AG04449 (cell line): ENCODE measurements at regions of chr5 and their contacts with region 1.

Region 1: GRCh38 chr5:65742565-65743231 is 20.7 kb downstream of the NLN start:
- DNase-seq: peak; percentile 58
- H3K4me3 ChIP-seq: no peak overlapping the region
- CTCF ChIP-seq: peak; percentile 64

Region 2: GRCh38 chr5:65382582-65382981 is 360.1 kb before region 1 on chr5:
- CTCF ChIA-PET with region 1: no interaction called
- POLR2A ChIA-PET with region 1: no interaction called
- DNase-seq: no peak
- H3K4me3 ChIP-seq: no peak overlapping the region
- CTCF ChIP-seq: no peak

Region 3: GRCh38 chr5:65539827-65540226 is 202.9 kb before region 1 on chr5:
- CTCF ChIA-PET with region 1: no interaction called
- POLR2A ChIA-PET with region 1: no interaction called
- DNase-seq: no peak
- H3K4me3 ChIP-seq: no peak overlapping the region
- CTCF ChIP-seq: no peak

Region 4: DNA sequence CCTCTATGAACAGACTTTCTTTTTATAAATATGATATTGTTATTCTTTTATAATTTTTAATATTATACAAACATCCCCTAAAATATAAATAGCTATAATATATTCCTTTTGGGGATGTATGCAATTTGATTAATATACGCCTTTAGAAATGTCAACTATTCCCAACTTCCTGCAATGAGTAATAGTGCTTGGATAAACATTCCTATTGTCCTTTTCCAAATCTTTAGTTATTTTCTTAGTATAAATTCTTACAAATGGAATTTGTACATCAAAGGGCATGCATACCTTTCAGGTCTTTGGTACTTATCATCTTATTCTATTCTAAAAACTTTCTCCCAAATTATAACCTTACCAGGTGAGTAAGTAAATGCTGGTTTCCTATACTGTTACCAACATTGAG is 14.5 kb before region 1 on chr5:
- CTCF ChIA-PET with region 1: interaction called, 24 read pairs
- POLR2A ChIA-PET with region 1: no interaction called
- DNase-seq: no peak
- H3K4me3 ChIP-seq: no peak overlapping the region
- CTCF ChIP-seq: no peak